Dorsolateral prefrontal cortex (tissue), 120 donors: ENCODE measurements at regions of chr5 and their contacts with region 1.

Region 1: GRCh38 chr5:78269088-78269703 is 25.3 kb downstream of the AP3B1 start:
- DNase-seq: no peak
- H3K4me3 ChIP-seq: no peak overlapping the region
- H3K27ac ChIP-seq: no peak overlapping the region
- H3K27me3 ChIP-seq: no peaks in the 10 kb centered on the region
- CTCF ChIP-seq: peak; percentile 31 to 76 (median 64)

Region 2: DNA sequence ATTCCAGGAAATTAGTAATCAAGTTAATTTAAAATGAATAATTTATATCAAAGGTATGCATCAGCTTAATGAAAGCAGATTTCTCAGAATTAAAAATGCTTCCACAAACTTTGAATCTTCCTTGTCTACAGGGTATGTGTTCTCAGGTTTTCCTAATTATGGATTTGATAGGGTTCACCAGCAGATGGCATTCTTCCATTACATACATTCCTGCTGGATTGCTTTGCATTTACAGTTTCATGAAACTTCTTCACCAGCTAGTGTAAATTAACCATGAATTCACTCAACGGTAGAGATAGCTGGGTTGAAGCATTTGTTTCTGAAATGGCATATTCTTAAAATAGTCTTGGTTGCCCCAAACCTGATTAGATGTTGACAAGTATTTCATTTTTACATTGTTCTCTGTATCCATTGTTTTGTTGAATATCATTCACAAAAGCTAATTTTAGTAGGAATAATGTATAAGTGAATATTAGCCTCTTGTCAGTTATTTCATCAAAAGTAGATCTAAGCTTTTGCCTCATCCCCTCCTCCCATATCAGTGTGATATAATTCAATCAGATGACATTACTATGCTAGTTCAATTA is 708.4 kb before region 1 on chr5:
- intact Hi-C with region 1: loop called in 1 of 2 experiments (anchors 10 kb)
- DNase-seq: no peak
- H3K4me3 ChIP-seq: no peak overlapping the region
- H3K27ac ChIP-seq: no peak overlapping the region
- H3K27me3 ChIP-seq: peaks cover 0 to 7% (median 0%) of the 10 kb centered on the region in 45 donors
- CTCF ChIP-seq: peak; percentile 45 to 83 (median 64)

Region 3: GRCh38 chr5:77645158-77645994 is 623.8 kb before region 1 on chr5:
- intact Hi-C with region 1: loop called in 1 of 2 experiments (anchors 10 kb)
- DNase-seq: peak in 1 of 10 donors; percentile 63
- H3K4me3 ChIP-seq: peak overlapping the region in 51 of 59 donors; percentile 10 to 66 (median 45)
- H3K27ac ChIP-seq: no peak overlapping the region
- H3K27me3 ChIP-seq: peaks cover 26 to 65% (median 52%) of the 10 kb centered on the region in 45 donors
- CTCF ChIP-seq: peak in 48 of 56 donors; percentile 13 to 77 (median 44)

Region 4: GRCh38 chr5:77867194-77867691 is 402.0 kb before region 1 on chr5:
- intact Hi-C with region 1: loop called in 1 of 2 experiments (anchors 10 kb)
- DNase-seq: no peak
- H3K4me3 ChIP-seq: no peak overlapping the region
- H3K27ac ChIP-seq: peak overlapping the region in 54 of 59 donors; percentile 12 to 87 (median 70)
- H3K27me3 ChIP-seq: no peaks in the 10 kb centered on the region
- CTCF ChIP-seq: peak in 55 of 56 donors; percentile 15 to 67 (median 45)

Region 5: GRCh38 chr5:78367318-78367991 is 98.3 kb after region 1 on chr5:
- intact Hi-C with region 1: no loop called
- DNase-seq: no peak
- H3K4me3 ChIP-seq: no peak overlapping the region
- H3K27ac ChIP-seq: no peak overlapping the region
- H3K27me3 ChIP-seq: no peaks in the 10 kb centered on the region
- CTCF ChIP-seq: no peak